Pancreas (tissue), 10 donors: ENCODE measurements at regions of chr5 and their contacts with region 1.

Region 1: GRCh38 chr5:172920447-172920849 is 38.8 kb upstream of the RPL26L1 start:
- DNase-seq: peak in 1 of 6 donors; percentile 63
- ATAC-seq: peak in 1 of 4 donors; percentile 30
- H3K4me3 ChIP-seq: no peak overlapping the region
- H3K27ac ChIP-seq: no peak overlapping the region
- H3K4me1 ChIP-seq: no peaks in the 10 kb centered on the region
- H3K27me3 ChIP-seq: no peaks in the 10 kb centered on the region
- CTCF ChIP-seq: no peak

Region 2: GRCh38 chr5:172496671-172497371 is 423.6 kb before region 1 on chr5:
- intact Hi-C with region 1: loop called in 1 of 3 experiments (anchors 10 kb)
- DNase-seq: peak in 1 of 6 donors; percentile 32
- ATAC-seq: no peak
- H3K4me3 ChIP-seq: no peak overlapping the region
- H3K27ac ChIP-seq: no peak overlapping the region
- H3K4me1 ChIP-seq: no peaks in the 10 kb centered on the region
- H3K27me3 ChIP-seq: no peaks in the 10 kb centered on the region
- CTCF ChIP-seq: no peak

Region 3: DNA sequence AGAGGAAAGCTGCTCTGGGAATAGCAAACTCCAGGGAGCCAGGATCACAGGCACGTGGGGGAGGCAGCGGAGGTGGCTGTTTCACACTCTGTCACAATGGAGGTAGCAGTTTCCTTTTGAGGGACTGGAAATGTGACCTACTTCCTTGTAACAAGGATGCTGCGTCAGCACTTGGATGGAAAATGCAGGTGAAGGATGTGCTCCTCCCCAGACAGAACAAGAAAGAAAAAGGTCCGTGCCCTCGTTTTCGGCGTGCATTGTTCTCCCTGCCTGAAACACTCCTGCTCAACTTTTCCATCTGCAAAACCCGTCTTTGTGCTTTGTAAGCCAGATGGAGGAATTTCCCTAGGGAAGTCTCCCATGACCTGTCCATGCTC is 411.1 kb before region 1 on chr5:
- intact Hi-C with region 1: no loop called
- DNase-seq: peak in 2 of 6 donors; percentile 8 to 20
- ATAC-seq: no peak
- H3K4me3 ChIP-seq: no peak overlapping the region
- H3K27ac ChIP-seq: no peak overlapping the region
- H3K4me1 ChIP-seq: no peaks in the 10 kb centered on the region
- H3K27me3 ChIP-seq: peaks cover 0 to 5% (median 0%) of the 10 kb centered on the region in 4 donors
- CTCF ChIP-seq: no peak

Region 4: DNA sequence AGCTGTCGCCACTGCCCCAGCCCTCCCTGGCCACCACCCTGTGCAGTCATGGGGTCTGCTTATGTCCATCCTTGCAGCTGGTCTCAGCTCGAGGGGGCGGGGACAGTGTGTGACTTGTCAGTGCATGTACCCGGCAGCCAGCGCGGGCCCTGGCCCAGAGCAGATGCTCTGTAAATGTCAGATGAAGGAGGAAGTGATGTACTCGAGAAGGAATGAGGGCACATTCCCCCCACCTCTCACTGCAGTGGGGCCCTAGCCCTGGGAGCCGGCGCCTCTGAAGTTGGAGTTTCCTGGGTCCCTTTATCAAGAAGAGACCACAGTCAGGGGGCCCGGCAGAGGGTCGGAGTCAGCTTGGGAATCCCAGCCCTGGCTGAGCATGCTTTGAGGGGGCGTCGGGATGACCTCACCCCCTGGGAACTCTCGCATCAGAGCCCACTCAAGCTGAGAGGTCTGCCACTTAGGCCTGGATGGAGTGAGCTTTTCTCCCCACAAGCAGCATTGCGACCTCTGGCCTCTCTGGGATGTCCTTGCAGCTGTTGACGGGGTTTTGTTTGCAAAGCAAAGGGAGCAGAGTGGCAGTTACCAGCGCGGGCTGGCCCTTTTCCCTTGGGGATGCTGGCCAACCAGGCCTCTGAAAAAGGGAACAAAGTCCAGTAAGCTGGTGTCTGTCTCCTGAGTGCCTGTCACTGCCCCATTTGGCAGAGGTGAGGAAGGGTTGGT is 260.4 kb before region 1 on chr5:
- intact Hi-C with region 1: no loop called
- DNase-seq: peak; percentile 85 to 93 (median 90)
- ATAC-seq: peak; percentile 87 to 94 (median 90)
- H3K4me3 ChIP-seq: no peak overlapping the region
- H3K27ac ChIP-seq: peak overlapping the region; percentile 47 to 67 (median 62)
- H3K4me1 ChIP-seq: peaks cover 13 to 30% (median 26%) of the 10 kb centered on the region in 3 donors
- H3K27me3 ChIP-seq: no peaks in the 10 kb centered on the region
- CTCF ChIP-seq: no peak

Region 5: DNA sequence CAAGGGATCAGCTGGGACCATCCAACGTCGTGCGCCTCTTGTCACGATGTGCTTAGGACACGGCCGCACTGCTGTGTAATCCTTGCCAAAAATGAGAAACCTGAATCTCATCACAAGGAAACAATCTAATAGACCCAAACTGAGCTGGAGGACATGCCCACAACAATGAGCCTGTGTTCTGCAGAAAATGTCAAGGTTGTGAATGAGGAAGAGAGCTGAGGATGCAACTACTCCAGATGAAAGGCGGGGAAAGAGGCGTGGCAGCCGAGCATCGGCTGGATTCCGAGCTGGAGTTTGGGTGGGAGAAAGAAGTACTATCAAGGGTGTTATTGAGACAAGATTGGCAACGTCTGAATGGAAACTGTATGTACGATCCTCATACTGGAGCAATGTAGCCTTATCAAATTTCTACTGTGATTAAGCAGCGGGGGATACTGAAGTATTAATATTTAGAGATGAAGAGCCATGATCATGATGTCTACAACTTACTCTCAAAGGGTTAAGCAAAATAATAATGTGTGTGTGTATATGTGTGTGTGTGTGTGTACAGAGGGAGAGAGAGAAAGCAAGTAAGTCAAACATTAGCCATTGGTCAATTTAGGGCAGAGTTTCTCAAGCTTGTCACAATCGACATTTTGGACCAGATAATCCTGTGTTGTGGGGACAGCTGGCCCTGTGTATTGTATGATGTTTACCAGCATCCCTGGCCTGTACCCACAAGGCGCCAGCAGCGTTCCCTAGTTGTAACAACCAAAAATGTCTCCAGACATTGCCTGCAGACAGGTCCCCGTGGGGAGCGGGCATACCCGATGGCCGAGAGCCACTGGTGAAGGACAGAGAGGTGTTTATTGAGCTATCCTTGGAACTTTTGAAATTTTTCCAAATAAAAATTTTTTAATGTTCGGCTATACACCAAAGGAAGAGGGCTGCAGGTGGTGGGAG is 195.9 kb before region 1 on chr5:
- intact Hi-C with region 1: loop called in 1 of 3 experiments (anchors 5 kb)
- DNase-seq: peak in 1 of 6 donors; percentile 57
- ATAC-seq: peak in 3 of 4 donors; percentile 30 to 57 (median 40)
- H3K4me3 ChIP-seq: no peak overlapping the region
- H3K27ac ChIP-seq: no peak overlapping the region
- H3K4me1 ChIP-seq: peaks cover 0 to 10% (median 0%) of the 10 kb centered on the region in 3 donors
- H3K27me3 ChIP-seq: no peaks in the 10 kb centered on the region
- CTCF ChIP-seq: no peak

Region 6: DNA sequence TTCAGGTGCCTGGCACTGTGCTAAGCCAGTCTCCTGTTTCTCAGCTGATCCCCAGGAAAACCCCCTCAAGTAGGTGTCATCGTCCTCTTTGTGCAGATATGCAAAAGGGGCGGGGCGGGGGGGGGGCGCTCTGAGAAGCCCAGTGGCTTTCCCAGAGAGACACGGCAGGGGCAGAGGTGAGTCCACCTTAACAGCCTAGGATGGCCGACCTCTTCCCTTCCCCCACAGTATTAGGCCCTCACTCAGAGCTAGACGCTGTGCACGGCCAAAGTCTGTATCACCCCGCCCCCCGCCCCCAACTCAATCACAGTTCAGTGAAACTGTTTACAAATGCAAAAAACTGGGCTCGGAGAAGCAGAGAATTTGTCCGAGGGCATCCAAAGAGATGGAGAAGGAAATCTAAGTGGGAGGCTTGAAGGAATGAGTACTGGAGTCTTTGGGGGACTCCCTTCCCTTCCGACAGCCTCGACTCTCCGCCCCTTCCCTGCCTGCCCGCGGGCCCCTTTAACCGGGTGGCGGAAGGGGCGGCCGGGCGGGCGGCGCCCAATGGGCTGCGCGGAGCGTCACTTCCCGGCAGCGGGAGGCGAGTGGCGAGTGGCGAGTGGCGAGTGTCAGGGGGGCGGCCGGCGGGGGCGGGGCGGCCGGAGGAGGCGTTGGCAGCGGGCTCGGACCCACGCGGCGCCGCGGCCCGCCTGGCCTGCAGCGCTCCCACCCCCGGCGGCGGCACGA is 86.6 kb before region 1 on chr5 and contains the start of gene ERGIC1:
- intact Hi-C with region 1: no loop called
- DNase-seq: peak; percentile 79 to 94 (median 88)
- ATAC-seq: peak; percentile 79 to 88 (median 87)
- H3K4me3 ChIP-seq: peak within 1 kb of the TSS; percentile 57 to 88 (median 76)
- H3K27ac ChIP-seq: peak within 1 kb of the TSS; percentile 75 to 90 (median 78)
- H3K4me1 ChIP-seq: peaks cover 15 to 21% (median 18%) of the 10 kb centered on the region in 3 donors
- H3K27me3 ChIP-seq: no peaks in the 10 kb centered on the region
- CTCF ChIP-seq: no peak
- total RNA-seq, gene ERGIC1: 58.3 to 101 (median 76.7) TPM

Region 7: GRCh38 chr5:173341961-173342430 is 421.5 kb after region 1 on chr5:
- intact Hi-C with region 1: no loop called
- DNase-seq: no peak
- ATAC-seq: no peak
- H3K4me3 ChIP-seq: no peak overlapping the region
- H3K27ac ChIP-seq: no peak overlapping the region
- H3K4me1 ChIP-seq: no peaks in the 10 kb centered on the region
- H3K27me3 ChIP-seq: no peaks in the 10 kb centered on the region
- CTCF ChIP-seq: no peak